Mammary epithelial cell (primary cell): ENCODE measurements at regions of chr11 and their contacts with region 1.

Region 1: GRCh38 chr11:4187055-4187988 is 92.7 kb downstream of the RRM1 start:
- DNase-seq: peak; percentile 63
- H3K4me3 ChIP-seq: peak overlapping the region; percentile 46 to 73 (median 60)
- H3K27ac ChIP-seq: no peak overlapping the region
- H3K4me1 ChIP-seq: no peaks in the 10 kb centered on the region
- H3K27me3 ChIP-seq: no peaks in the 10 kb centered on the region
- CTCF ChIP-seq: peak; percentile 61 to 90

Region 2: GRCh38 chr11:3894128-3894731 is 293.1 kb before region 1 on chr11:
- CTCF ChIA-PET with region 1: no interaction called
- dilution Hi-C with region 1: no loop called
- in situ Hi-C with region 1: no loop called
- intact Hi-C with region 1: no loop called
- DNase-seq: no peak
- H3K4me3 ChIP-seq: no peak overlapping the region
- H3K27ac ChIP-seq: no peak overlapping the region
- H3K4me1 ChIP-seq: peaks cover 6% of the 10 kb centered on the region
- H3K27me3 ChIP-seq: no peaks in the 10 kb centered on the region
- CTCF ChIP-seq: no peak

Region 3: DNA sequence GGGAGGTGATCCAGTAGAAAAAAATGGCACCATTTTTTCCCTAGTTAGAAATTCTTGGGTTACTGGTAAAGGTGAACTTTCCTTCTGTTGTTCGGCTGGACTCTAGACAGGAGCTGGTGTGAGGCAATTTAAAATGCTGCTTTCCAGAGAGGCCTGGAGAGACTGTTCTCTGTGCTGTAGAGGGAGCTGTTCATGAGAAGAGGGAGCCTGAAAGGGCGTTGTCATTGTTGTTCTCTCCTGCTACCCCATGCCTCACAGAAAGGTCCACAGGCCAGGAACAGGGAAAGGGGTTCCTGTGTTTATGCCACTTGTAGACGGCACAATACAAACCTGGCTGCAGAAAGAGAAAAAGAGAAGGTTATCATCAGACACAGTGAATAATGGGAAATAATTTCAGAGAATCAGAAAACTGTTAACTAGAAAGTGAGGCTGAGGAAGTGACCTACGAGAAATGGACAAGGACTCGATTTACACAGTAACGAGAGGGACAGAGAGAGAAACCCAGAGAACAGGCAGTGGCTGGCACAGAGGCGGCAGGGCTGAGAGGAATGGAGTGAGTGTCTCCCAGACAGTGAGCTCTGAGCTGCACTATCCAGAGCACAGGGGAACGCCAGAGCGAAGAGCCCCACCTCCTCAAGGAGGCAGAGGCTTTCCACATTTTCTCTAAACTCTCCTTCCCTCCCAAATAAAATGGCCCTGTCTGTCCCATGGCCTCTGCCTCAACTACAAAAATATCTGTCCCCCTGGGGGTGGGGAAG is 16.5 kb after region 1 on chr11:
- CTCF ChIA-PET with region 1: interaction called, 19 read pairs
- dilution Hi-C with region 1: no loop called
- in situ Hi-C with region 1: no loop called
- intact Hi-C with region 1: no loop called
- DNase-seq: no peak
- H3K4me3 ChIP-seq: no peak overlapping the region
- H3K27ac ChIP-seq: no peak overlapping the region
- H3K4me1 ChIP-seq: no peaks in the 10 kb centered on the region
- H3K27me3 ChIP-seq: no peaks in the 10 kb centered on the region
- CTCF ChIP-seq: peak in 1 of 2 donors; percentile 1

Region 4: GRCh38 chr11:4433856-4434255 is 246.5 kb after region 1 on chr11:
- CTCF ChIA-PET with region 1: no interaction called
- dilution Hi-C with region 1: no loop called
- in situ Hi-C with region 1: no loop called
- intact Hi-C with region 1: no loop called
- DNase-seq: no peak
- H3K4me3 ChIP-seq: no peak overlapping the region
- H3K27ac ChIP-seq: no peak overlapping the region
- H3K4me1 ChIP-seq: no peaks in the 10 kb centered on the region
- H3K27me3 ChIP-seq: no peaks in the 10 kb centered on the region
- CTCF ChIP-seq: no peak

Region 5: DNA sequence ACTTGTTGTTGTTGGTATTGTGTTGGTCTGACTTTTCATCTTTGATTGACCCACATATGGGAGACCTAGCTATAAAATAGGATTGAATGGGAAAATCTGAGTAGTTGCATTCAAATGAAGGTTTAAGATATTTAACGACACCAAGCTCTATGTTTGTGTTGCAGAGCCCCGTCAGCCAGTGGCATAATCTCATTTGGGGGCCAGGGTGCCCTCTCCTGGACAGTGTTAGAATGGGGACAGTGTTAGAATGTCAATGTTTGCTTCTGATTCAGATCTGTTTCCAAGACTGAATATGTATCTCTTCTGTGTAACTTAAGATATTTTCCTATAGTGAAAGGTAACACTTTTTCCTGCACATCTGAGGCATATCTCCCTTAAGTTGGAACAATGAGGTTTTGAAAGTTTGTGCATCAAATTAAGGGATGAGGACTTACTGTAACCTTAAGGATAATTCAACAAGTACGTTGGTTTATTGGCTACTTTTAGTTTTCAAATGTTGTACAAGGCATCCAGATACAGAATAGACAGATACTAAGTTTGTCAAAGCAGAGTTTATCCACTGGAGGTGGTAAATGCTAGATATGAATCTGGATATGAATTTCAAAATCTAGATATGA is 352.4 kb after region 1 on chr11:
- CTCF ChIA-PET with region 1: interaction called, 13 read pairs
- dilution Hi-C with region 1: no loop called
- in situ Hi-C with region 1: loop called in 1 of 2 experiments (anchors 10 kb)
- intact Hi-C with region 1: loop called (anchors 1 kb)
- DNase-seq: peak; percentile 14
- H3K4me3 ChIP-seq: no peak overlapping the region
- H3K27ac ChIP-seq: no peak overlapping the region
- H3K4me1 ChIP-seq: peaks cover 8% of the 10 kb centered on the region
- H3K27me3 ChIP-seq: no peaks in the 10 kb centered on the region
- CTCF ChIP-seq: peak; percentile 83 to 87

Region 6: DNA sequence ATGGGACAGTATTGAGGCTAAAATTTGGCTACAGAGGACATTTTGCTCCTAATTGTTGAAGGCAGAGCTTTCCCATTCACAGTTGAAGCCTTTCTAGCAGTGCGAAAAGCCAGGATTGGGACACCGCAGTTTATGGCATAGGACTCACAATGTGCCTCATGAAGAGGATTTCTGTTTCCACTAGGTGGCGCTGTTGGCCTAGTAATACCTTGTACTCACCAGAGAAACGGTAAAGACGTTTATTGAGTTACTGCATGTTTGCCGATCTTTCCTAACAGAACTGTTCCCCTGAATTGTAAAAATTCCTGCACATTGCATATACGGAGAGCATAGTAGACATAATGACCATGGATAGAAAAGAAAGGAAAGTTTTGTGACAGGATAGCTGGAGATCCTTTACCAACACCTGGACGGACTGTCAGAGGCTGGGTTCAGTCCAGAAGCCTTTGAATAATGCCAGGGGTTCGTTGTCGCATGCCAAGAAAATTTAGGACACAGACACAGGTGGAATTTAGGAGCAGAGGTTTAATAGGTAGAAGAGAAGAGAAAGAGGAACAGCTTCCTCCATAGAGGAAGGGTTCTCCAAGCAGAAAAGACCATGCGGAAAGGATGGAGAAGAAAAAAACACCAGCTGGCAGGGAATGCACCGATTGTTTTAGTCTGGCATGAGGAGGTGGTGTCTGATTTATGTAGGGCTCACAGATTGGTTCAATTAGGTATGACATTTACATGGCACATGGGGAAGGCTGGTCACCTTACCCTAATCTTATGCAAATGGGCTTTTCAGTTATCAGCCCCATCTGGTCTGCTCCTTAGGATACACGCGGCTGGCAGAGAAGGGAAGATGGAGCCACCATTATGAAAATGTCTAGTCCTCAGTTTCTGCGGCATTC is 439.1 kb after region 1 on chr11:
- CTCF ChIA-PET with region 1: no interaction called
- dilution Hi-C with region 1: no loop called
- in situ Hi-C with region 1: no loop called
- intact Hi-C with region 1: loop called (anchors 1 kb)
- DNase-seq: peak; percentile 63
- H3K4me3 ChIP-seq: no peak overlapping the region
- H3K27ac ChIP-seq: no peak overlapping the region
- H3K4me1 ChIP-seq: no peaks in the 10 kb centered on the region
- H3K27me3 ChIP-seq: no peaks in the 10 kb centered on the region
- CTCF ChIP-seq: peak; percentile 70 to 79

Region 7: GRCh38 chr11:4991060-4991459 is 803.7 kb after region 1 on chr11:
- CTCF ChIA-PET with region 1: no interaction called
- dilution Hi-C with region 1: no loop called
- in situ Hi-C with region 1: loop called in 1 of 2 experiments (anchors 25 kb)
- intact Hi-C with region 1: no loop called
- DNase-seq: no peak
- H3K4me3 ChIP-seq: no peak overlapping the region
- H3K27ac ChIP-seq: no peak overlapping the region
- H3K4me1 ChIP-seq: no peaks in the 10 kb centered on the region
- H3K27me3 ChIP-seq: no peaks in the 10 kb centered on the region
- CTCF ChIP-seq: peak; percentile 18 to 44